Esophagus squamous epithelium (tissue), 5 donors: ENCODE measurements at regions of chr1 and their contacts with region 1.

Region 1: DNA sequence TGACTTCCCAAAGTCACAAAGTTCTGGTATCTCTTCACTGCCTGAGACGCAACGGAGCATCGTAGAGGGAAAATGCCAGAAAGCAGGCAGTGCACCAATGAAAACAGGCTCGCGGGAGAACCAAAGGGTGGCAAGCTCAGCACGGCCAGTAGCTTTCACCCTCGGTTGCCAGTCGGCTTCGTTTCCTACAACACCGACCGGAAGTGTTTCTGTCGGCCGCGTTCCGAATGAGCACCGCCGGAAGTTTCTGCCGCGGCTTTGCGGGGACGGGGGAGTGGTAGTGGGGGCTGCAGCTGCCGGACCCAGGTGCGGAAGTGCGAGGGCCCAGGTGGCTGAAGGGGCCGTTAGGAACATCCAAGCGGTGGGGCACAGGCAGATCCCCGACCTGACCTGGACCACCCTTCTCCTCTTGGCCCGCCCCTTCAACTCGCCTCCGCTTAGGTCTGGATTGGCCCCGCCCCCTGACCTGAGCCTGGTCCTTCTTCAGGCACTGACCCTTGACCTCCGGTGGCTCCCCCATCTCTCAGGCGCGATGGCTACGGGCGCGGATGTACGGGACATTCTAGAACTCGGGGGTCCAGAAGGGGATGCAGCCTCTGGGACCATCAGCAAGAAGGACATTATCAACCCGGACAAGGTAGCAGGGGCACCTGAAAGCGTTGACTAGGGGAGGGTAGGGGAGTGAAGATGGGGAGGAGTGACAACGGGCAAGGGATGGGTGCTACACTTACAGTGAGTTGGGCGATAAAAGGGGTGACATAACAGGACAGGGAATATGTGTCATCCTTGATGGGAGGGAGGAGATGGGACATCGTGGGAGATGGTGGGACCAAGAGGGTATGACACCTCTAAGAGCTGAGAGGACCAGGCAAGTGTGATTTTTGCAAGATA is at the start of gene DMAP1:
- DNase-seq: no peak
- H3K4me3 ChIP-seq: peak within 1 kb of the TSS; percentile 83 to 99 (median 93)
- H3K27ac ChIP-seq: peak within 1 kb of the TSS; percentile 86 to 92 (median 88)
- H3K4me1 ChIP-seq: peaks cover 5 to 28% (median 20%) of the 10 kb centered on the region in 3 donors
- H3K27me3 ChIP-seq: no peaks in the 10 kb centered on the region
- CTCF ChIP-seq: peak in 5 of 6 experiments; percentile 7 to 71 (median 20)
- POLR2A ChIP-seq: peak in 2 of 4 donors; percentile 34 to 83
- total RNA-seq, gene DMAP1: 19.2 to 45.2 (median 22.0) TPM

Region 2: DNA sequence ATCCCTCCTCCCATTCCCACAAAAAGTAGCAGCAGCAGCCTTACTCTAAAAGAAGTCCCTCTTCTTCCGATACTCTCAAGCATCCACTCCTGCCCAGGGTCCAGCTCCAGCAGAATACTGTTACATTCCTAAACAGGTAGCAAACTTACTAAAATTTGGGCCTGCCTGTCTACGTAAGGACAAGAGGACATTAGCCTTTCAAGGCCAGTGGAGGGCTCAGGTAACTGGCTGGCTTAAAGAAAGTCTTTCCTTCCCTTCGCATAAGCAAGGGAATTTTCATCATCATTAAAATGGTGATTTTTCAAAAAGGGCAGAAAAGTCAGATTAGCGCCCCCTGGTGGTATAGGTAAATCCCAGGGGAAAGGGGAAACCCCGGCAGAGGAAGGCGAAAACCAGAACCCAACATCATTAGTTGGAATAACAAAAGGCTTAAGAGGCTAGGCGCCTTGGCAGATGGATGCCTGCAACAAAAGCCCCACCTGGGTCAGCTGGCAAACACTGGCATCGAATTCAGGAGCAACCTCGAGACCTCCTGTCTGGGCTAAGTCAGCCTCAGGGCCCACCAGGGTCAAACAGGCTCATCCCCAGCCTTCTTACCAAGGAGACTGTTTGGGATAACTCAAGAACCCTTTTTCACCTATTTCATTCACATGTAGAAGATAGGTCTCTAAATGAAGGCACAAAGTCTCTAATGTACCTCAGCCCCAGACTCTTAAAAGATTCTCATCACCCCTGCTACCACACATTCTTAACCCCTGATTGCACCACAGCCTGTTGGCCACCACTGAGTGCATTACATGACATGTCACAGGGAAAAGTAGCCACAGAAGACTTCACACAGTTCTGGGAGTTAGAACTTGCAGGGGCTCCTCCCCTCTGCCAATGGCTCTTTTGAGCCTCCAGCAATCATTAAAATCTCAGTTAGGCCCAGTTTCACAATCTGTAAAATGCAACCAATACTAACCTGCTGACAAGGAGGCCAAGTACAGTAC is 104.9 kb after region 1 on chr1:
- intact Hi-C with region 1: loop called (anchors 10 kb)
- DNase-seq: no peak
- H3K4me3 ChIP-seq: no peak overlapping the region
- H3K27ac ChIP-seq: no peak overlapping the region
- H3K4me1 ChIP-seq: no peaks in the 10 kb centered on the region
- H3K27me3 ChIP-seq: no peaks in the 10 kb centered on the region
- CTCF ChIP-seq: peak; percentile 61 to 82 (median 76)
- POLR2A ChIP-seq: no peak

Region 3: GRCh38 chr1:44417351-44418021 is 204.0 kb after region 1 on chr1:
- intact Hi-C with region 1: no loop called
- DNase-seq: no peak
- H3K4me3 ChIP-seq: peak overlapping the region in 3 of 4 donors; percentile 27 to 57 (median 41)
- H3K27ac ChIP-seq: peak overlapping the region in 1 of 4 donors; percentile 17
- H3K4me1 ChIP-seq: peaks cover 4 to 29% (median 9%) of the 10 kb centered on the region in 3 donors
- H3K27me3 ChIP-seq: peaks cover 10 to 100% (median 27%) of the 10 kb centered on the region in 4 donors
- CTCF ChIP-seq: no peak
- POLR2A ChIP-seq: no peak

Region 4: GRCh38 chr1:44594871-44595746 is 381.6 kb after region 1 on chr1:
- intact Hi-C with region 1: loop called (anchors 10 kb)
- DNase-seq: no peak
- H3K4me3 ChIP-seq: no peak overlapping the region
- H3K27ac ChIP-seq: no peak overlapping the region
- H3K4me1 ChIP-seq: peaks cover 0 to 4% (median 0%) of the 10 kb centered on the region in 3 donors
- H3K27me3 ChIP-seq: peaks cover 0 to 42% (median 1%) of the 10 kb centered on the region in 4 donors
- CTCF ChIP-seq: peak; percentile 79 to 97 (median 89)
- POLR2A ChIP-seq: no peak